ENCODE measurements at regions of chr3 and their contacts with region 1.

Region 1: DNA sequence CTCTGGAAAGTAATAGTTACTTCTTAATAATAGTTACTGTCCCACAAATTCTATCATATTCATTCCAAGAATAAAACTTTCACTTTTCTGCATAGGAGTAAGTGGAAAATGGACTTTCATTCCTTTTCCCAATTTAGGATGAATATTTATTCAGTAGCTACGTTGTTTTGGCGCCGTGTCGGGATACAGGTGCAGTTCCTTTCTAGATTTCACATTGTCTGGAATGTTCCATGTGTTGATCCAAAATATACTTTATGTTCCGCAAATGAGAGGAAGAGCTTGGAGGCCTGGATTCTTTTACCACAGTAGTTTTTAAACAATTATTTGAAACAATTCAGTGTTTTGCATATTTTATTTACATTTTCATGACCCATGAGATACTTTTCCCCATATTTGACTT is 22.8 kb upstream of the PPARG start:
- DNase-seq: no peak
- H3K4me3 Mint-ChIP-seq: no peak overlapping the region
- H3K27ac Mint-ChIP-seq: no peak overlapping the region
- H3K4me1 Mint-ChIP-seq: no peaks in the 10 kb centered on the region
- H3K27me3 Mint-ChIP-seq: peaks cover 6% of the 10 kb centered on the region

Region 2: DNA sequence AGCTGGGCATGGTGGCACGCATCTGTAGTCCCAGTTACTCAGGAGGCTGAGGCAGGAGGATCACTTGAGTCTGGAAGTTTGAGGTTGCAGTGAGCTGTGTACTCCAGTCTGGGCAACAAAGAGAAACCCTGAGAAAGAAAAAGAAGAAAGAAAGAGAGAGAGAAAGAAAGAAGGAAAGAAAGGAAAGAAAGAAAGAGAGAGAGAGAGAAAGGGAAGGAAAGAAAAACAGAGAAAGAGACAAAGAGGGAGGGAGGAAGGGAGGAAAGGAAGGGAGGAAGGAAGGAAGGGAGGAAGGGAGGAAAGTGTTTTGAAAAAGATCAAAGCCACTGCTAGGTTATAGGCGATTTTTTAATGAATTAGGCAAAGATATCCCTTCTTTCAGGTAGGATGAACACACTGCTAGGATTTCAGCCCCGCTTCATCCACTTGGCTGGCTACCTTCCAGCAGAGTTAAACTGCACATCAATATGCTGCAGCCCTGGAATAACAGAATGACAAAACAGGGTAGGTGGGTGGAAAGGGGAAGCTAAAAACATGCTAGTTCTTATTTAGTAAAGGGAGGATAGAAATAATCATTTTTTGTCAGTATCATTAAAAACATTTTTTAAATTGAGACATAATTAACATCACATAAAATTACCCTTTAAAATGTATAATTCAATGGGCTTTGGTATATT is 10.1 kb after region 1 on chr3:
- CTCF ChIA-PET with region 1: no interaction called
- POLR2A ChIA-PET with region 1: no interaction called
- DNase-seq: no peak
- H3K4me3 Mint-ChIP-seq: no peak overlapping the region
- H3K27ac Mint-ChIP-seq: no peak overlapping the region
- H3K4me1 Mint-ChIP-seq: no peaks in the 10 kb centered on the region
- H3K27me3 Mint-ChIP-seq: peaks cover 7% of the 10 kb centered on the region

Region 3: DNA sequence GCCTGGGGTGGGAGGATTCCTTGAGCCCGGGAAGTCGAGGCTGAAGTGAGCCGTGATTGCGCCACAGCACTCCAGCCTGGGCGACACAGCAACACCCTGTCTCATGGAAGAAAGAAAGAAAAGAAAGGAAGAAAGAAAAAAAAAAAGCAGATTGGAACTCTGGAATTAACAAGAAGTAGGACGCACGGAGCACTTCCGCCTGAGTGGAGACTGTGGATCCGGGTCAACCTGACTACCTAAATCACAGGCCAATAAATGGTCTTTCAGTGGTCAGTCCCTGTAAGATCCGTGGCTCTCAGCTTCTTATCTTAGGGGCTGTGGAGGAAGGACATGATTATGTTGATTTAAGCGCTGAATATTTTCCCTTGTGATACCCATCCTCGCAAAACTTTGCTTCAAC is 20.5 kb after region 1 on chr3:
- CTCF ChIA-PET with region 1: interaction called, 5 read pairs
- POLR2A ChIA-PET with region 1: interaction called, 13 read pairs
- DNase-seq: no peak
- H3K4me3 Mint-ChIP-seq: no peak overlapping the region
- H3K27ac Mint-ChIP-seq: no peak overlapping the region
- H3K4me1 Mint-ChIP-seq: peaks cover 2% of the 10 kb centered on the region
- H3K27me3 Mint-ChIP-seq: peaks cover 57% of the 10 kb centered on the region